Left cardiac atrium (tissue), 4 donors: ENCODE measurements at regions of chr16 and their contacts with region 1.

Region 1: GRCh38 chr16:81696961-81697615 is 82.0 kb upstream of the PLCG2 start:
- DNase-seq: no peak
- ATAC-seq: peak; percentile 29 to 43

Region 2: GRCh38 chr16:81623363-81624102 is 73.6 kb before region 1 on chr16:
- intact Hi-C with region 1: loop called in 1 of 2 experiments (anchors 10 kb)
- DNase-seq: no peak
- ATAC-seq: no peak